ENCODE measurements at regions of chr10 and their contacts with region 1.

Region 1: GRCh38 chr10:132458593-132459300 is 61.7 kb downstream of the PWWP2B start:
- DNase-seq: no peak
- H3K4me3 ChIP-seq: no peak overlapping the region
- H3K27ac ChIP-seq: no peak overlapping the region
- H3K4me1 ChIP-seq: peaks cover 0 to 20% (median 19%) of the 10 kb centered on the region in 4 donors
- H3K27me3 ChIP-seq: no peaks in the 10 kb centered on the region
- CTCF ChIP-seq: peak; percentile 96 to 99 (median 98)
- EP300 ChIP-seq: no peak
- POLR2A ChIP-seq: no peak

Region 2: GRCh38 chr10:132575356-132576201 is 116.8 kb after region 1 on chr10:
- intact Hi-C with region 1: loop called (anchors 2 kb)
- DNase-seq: no peak
- H3K4me3 ChIP-seq: peak overlapping the region in 2 of 4 donors; percentile 7 to 10
- H3K27ac ChIP-seq: peak overlapping the region; percentile 70 to 83 (median 76)
- H3K4me1 ChIP-seq: peaks cover 0 to 85% (median 80%) of the 10 kb centered on the region in 4 donors
- H3K27me3 ChIP-seq: no peaks in the 10 kb centered on the region
- CTCF ChIP-seq: no peak
- EP300 ChIP-seq: peak in 1 of 4 donors; percentile 29
- POLR2A ChIP-seq: no peak